CD8-positive, alpha-beta T cell (primary cell): ENCODE measurements at regions of chr20 and their contacts with region 1.

Region 1: GRCh38 chr20:41428285-41428684 is 61.7 kb upstream of the EMILIN3 start:
- DNase-seq: peak in 7 of 9 experiments; percentile 6 to 72 (median 39)
- ATAC-seq: peak; percentile 94
- H3K4me3 ChIP-seq: no peak overlapping the region
- H3K4me3 Mint-ChIP-seq: peak overlapping the region; percentile 9
- H3K27ac ChIP-seq: peak overlapping the region in 1 of 2 experiments; percentile 12
- H3K27ac Mint-ChIP-seq: peak overlapping the region; percentile 86
- H3K4me1 ChIP-seq: peaks cover 27% of the 10 kb centered on the region
- H3K4me1 Mint-ChIP-seq: peaks cover 37% of the 10 kb centered on the region
- H3K27me3 ChIP-seq: no peaks in the 10 kb centered on the region
- H3K27me3 Mint-ChIP-seq: no peaks in the 10 kb centered on the region
- CTCF ChIP-seq: no peak

Region 2: DNA sequence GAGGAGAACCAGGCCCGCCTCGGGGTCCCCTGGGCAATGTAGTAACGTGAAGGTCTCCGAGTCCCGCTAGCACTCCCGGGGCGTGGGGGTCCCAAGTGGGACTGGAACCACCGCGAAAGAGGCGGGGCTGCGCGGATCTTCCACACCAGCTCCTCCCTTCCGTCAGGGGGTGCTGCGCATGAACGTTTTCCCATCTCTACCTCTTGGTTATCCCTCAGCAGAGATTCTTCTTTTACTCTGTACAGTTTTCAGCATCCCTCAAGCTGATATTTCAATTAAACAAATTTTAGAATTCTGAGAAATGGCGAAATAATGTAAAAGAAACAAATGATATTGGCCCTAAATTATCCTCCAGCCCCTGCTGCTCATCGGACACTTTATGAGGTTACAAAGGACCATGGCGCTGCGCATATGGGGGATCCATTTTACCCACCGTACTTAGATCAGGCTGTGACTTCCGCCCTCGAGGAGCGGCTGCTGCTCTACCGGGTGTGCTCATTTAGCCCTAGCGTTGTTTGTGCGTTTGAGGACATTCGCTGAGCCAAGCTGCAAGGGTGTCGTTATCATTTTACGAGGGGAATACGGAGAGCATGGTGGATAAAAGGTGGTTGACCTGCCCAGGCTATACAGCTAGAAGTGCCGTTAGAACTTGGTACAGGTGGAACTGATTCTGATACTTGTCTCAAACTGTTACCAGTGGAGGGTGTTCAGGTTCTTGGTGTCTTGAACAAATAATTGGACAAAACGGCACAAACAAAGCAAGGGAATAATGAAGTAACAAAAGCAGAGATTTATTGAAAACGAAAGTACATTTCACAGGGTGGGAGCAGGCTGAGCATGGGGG is 265.1 kb after region 1 on chr20:
- CTCF ChIA-PET with region 1: interaction called, 5 read pairs
- POLR2A ChIA-PET with region 1: interaction called, 5 read pairs
- intact Hi-C with region 1: loop called in 1 of 2 experiments (anchors 5 kb)
- DNase-seq: peak; percentile 60 to 94 (median 80)
- ATAC-seq: peak; percentile 86
- H3K4me3 ChIP-seq: peak overlapping the region; percentile 92 to 97
- H3K4me3 Mint-ChIP-seq: peak overlapping the region; percentile 87
- H3K27ac ChIP-seq: peak overlapping the region; percentile 86 to 91
- H3K27ac Mint-ChIP-seq: peak overlapping the region; percentile 93
- H3K4me1 ChIP-seq: peaks cover 10% of the 10 kb centered on the region
- H3K4me1 Mint-ChIP-seq: peaks cover 18% of the 10 kb centered on the region
- H3K27me3 ChIP-seq: no peaks in the 10 kb centered on the region
- H3K27me3 Mint-ChIP-seq: peaks cover 4% of the 10 kb centered on the region
- CTCF ChIP-seq: peak; percentile 40

Region 3: DNA sequence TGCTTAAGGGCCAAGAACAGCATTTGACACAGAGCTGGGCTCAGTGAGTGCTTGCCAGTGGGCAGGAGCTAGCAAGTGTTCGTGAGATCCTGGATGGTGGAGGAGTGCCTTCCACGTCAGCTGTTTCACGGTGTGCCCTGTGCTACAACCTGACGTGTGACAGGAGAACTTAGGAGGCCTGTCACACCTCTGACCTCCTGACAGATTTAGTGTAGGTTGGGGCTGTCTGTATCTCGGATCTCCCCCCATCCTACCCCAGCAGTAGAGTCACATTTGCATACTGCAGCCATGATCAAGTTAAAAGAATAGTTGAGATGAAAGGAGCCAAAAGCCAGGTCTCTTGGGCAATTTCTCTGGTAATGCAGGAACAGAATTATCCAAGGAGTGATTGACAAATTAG is 390.7 kb after region 1 on chr20:
- CTCF ChIA-PET with region 1: no interaction called
- POLR2A ChIA-PET with region 1: no interaction called
- intact Hi-C with region 1: no loop called
- DNase-seq: no peak
- ATAC-seq: no peak
- H3K4me3 ChIP-seq: no peak overlapping the region
- H3K4me3 Mint-ChIP-seq: no peak overlapping the region
- H3K27ac ChIP-seq: no peak overlapping the region
- H3K27ac Mint-ChIP-seq: no peak overlapping the region
- H3K4me1 ChIP-seq: no peaks in the 10 kb centered on the region
- H3K4me1 Mint-ChIP-seq: no peaks in the 10 kb centered on the region
- H3K27me3 ChIP-seq: no peaks in the 10 kb centered on the region
- H3K27me3 Mint-ChIP-seq: peaks cover 4% of the 10 kb centered on the region
- CTCF ChIP-seq: no peak